Mammary epithelial cell (primary cell): ENCODE measurements at regions of chr18 and their contacts with region 1.

Region 1: DNA sequence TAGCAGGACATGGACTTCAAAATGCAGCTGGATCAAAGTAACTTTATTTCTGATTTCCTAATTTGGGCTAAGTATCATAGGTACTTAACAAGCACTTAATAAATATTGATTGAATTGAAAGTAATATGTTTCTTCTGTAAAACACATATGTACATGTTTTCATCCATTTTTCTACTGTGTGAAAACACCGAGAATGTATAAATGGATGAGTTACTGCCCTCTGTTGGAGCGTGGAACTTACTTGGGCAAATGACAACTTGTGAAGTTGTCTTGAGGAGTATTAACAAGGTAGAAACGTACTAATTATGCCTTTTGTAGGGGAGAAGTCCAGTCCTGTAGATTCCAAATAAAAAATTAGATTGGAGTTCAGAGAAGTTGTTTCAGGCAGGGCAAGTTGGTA is 87.2 kb downstream of the PHLPP1 start:
- DNase-seq: no peak
- H3K4me3 ChIP-seq: no peak overlapping the region
- H3K27ac ChIP-seq: no peak overlapping the region
- H3K4me1 ChIP-seq: no peaks in the 10 kb centered on the region
- H3K27me3 ChIP-seq: no peaks in the 10 kb centered on the region
- CTCF ChIP-seq: peak in 1 of 2 donors; percentile 47

Region 2: DNA sequence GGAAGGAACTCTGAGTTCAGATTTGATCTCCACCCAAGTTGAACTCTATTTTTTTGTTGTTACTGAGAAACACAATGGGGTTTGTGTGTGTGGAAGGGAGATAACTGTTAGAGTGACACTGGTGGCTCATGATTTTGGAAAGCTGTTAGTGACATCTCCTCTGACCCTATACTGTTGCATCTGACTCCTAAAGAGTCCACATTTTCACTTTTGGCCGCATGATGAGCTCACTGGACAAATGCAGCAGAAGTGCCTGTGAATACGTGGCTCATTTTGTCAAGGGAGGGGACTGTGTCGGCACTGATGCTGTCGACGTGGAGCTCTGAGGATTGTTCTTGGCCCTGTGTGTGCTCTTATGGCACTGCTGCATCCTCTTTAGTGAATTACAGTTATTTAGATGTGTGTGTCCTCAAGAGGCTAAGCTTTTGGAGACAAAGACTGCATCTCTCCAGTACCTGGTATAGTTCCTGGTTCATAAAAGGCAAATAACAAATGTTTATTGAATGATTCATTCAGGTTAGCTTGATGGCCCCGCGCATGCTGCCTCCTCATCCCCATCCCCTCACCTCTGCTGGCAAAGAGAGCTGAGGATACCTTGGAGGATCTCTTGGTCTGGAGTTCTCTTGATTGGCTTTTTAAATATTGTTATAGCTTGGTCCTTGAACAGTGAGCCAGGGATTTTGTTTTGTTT is 48.2 kb after region 1 on chr18:
- CTCF ChIA-PET with region 1: no interaction called
- dilution Hi-C with region 1: no loop called
- in situ Hi-C with region 1: no loop called
- intact Hi-C with region 1: no loop called
- DNase-seq: no peak
- H3K4me3 ChIP-seq: no peak overlapping the region
- H3K27ac ChIP-seq: no peak overlapping the region
- H3K4me1 ChIP-seq: peaks cover 3% of the 10 kb centered on the region
- H3K27me3 ChIP-seq: no peaks in the 10 kb centered on the region
- CTCF ChIP-seq: no peak

Region 3: GRCh38 chr18:62957885-62958472 is 155.5 kb after region 1 on chr18:
- CTCF ChIA-PET with region 1: no interaction called
- dilution Hi-C with region 1: no loop called
- in situ Hi-C with region 1: no loop called
- intact Hi-C with region 1: loop called (anchors 1 kb)
- DNase-seq: peak; percentile 19
- H3K4me3 ChIP-seq: no peak overlapping the region
- H3K27ac ChIP-seq: no peak overlapping the region
- H3K4me1 ChIP-seq: no peaks in the 10 kb centered on the region
- H3K27me3 ChIP-seq: no peaks in the 10 kb centered on the region
- CTCF ChIP-seq: peak; percentile 14 to 50